ENCODE measurements at regions of chr5 and their contacts with region 1.

Region 1: DNA sequence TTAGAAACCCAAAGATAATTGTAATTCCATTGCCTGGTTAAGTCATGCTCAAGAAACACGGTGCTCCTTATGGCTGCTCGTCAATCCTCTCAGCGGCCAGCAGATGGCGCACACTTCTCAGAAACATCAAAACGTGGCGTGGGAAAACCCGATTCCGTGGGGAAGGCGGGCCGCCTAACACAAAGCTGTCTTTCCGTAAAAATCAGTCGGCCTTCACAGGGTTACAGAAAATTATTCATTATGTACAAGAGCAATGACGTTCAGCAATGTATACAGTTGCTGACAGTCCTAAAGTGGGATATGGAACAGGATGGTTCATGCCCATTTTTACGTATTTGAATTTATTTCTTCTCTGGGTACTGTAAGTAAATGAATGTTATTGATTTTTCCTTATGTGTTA is 83.5 kb downstream of the PDE4D start:
- DNase-seq: no peak
- H3K4me3 ChIP-seq: peak overlapping the region in 3 of 4 donors; percentile 9 to 40 (median 28)
- H3K27ac ChIP-seq: no peak overlapping the region
- H3K4me1 ChIP-seq: peaks cover 0 to 21% (median 11%) of the 10 kb centered on the region in 4 donors
- H3K27me3 ChIP-seq: no peaks in the 10 kb centered on the region
- CTCF ChIP-seq: peak; percentile 88 to 95 (median 91)
- EP300 ChIP-seq: no peak
- POLR2A ChIP-seq: no peak

Region 2: GRCh38 chr5:59873113-59873512 is 63.1 kb after region 1 on chr5:
- intact Hi-C with region 1: no loop called
- DNase-seq: no peak
- H3K4me3 ChIP-seq: no peak overlapping the region
- H3K27ac ChIP-seq: no peak overlapping the region
- H3K4me1 ChIP-seq: peaks cover 0 to 8% (median 0%) of the 10 kb centered on the region in 4 donors
- H3K27me3 ChIP-seq: no peaks in the 10 kb centered on the region
- CTCF ChIP-seq: no peak
- EP300 ChIP-seq: no peak
- POLR2A ChIP-seq: no peak

Region 3: GRCh38 chr5:60382716-60383115 is 572.7 kb after region 1 on chr5:
- intact Hi-C with region 1: loop called (anchors 5 kb)
- DNase-seq: no peak
- H3K4me3 ChIP-seq: no peak overlapping the region
- H3K27ac ChIP-seq: no peak overlapping the region
- H3K4me1 ChIP-seq: peaks cover 0 to 62% (median 42%) of the 10 kb centered on the region in 4 donors
- H3K27me3 ChIP-seq: no peaks in the 10 kb centered on the region
- CTCF ChIP-seq: peak; percentile 27 to 49 (median 29)
- EP300 ChIP-seq: no peak
- POLR2A ChIP-seq: no peak

Region 4: DNA sequence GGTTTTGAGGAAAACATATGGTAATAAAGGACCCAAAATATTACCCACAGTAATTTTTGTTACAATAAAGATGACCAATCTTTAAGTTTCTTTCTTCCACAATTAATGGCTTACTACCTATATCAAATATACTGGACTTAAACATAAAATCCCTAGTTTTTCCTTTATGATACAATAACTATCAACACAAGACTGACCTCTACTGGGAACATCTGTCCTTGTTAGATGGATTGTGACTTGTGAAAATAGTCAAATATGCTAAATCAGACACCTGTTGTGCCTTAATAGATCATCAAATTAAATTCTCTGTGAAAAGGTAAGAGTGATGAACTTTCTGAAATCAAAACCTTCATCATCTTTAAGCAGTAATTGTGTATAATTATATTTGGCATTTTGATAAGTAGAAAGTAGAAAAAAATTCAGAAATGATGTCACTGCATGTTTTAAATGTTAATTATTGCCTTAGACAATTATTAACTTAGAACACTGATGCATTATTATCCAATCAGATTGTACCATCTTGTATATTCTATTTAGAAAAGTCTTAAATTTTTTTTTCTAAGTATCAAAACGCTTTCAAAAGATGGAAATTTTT is 776.4 kb after region 1 on chr5:
- intact Hi-C with region 1: loop called (anchors 5 kb)
- DNase-seq: no peak
- H3K4me3 ChIP-seq: no peak overlapping the region
- H3K27ac ChIP-seq: no peak overlapping the region
- H3K4me1 ChIP-seq: peaks cover 0 to 8% (median 7%) of the 10 kb centered on the region in 4 donors
- H3K27me3 ChIP-seq: no peaks in the 10 kb centered on the region
- CTCF ChIP-seq: peak; percentile 44 to 55 (median 53)
- EP300 ChIP-seq: no peak
- POLR2A ChIP-seq: no peak

Region 5: GRCh38 chr5:60651872-60652616 is 842.0 kb after region 1 on chr5:
- intact Hi-C with region 1: loop called (anchors 5 kb)
- DNase-seq: no peak
- H3K4me3 ChIP-seq: no peak overlapping the region
- H3K27ac ChIP-seq: no peak overlapping the region
- H3K4me1 ChIP-seq: no peaks in the 10 kb centered on the region
- H3K27me3 ChIP-seq: no peaks in the 10 kb centered on the region
- CTCF ChIP-seq: no peak
- EP300 ChIP-seq: no peak
- POLR2A ChIP-seq: no peak

Region 6: GRCh38 chr5:60668686-60669304 is 858.8 kb after region 1 on chr5:
- intact Hi-C with region 1: loop called (anchors 5 kb)
- DNase-seq: no peak
- H3K4me3 ChIP-seq: no peak overlapping the region
- H3K27ac ChIP-seq: no peak overlapping the region
- H3K4me1 ChIP-seq: no peaks in the 10 kb centered on the region
- H3K27me3 ChIP-seq: no peaks in the 10 kb centered on the region
- CTCF ChIP-seq: peak; percentile 39 to 60 (median 59)
- EP300 ChIP-seq: no peak
- POLR2A ChIP-seq: no peak